ENCODE measurements at regions of chr7 and their contacts with region 1.

Region 1: GRCh38 chr7:31134246-31135188 is 82.4 kb downstream of the ADCYAP1R1 start:
- DNase-seq: peak in 1 of 2 donors; percentile 85
- H3K4me3 ChIP-seq: no peak overlapping the region
- H3K27ac ChIP-seq: no peak overlapping the region
- H3K4me1 ChIP-seq: no peaks in the 10 kb centered on the region
- H3K27me3 ChIP-seq: no peaks in the 10 kb centered on the region
- CTCF ChIP-seq: peak; percentile 10 to 57 (median 57)
- POLR2A ChIP-seq: no peak

Region 2: DNA sequence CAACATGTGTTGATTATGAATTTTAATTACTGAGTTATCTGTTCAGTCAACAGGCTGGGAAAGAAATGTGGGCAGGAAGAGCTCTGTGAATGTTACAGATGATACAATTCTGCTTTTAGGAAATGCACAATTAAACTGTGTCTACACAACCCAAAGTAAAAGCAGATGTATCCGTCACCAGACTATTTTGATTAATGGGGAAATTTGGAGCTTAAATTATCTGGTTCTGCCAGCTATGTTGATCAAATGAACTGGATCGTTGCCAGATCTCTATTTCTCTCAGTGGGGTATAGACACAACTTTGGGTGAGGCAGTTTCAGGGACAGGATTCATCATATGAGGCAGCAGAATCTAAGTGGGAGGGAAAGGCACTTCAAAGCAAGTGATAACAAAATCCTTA is 69.6 kb after region 1 on chr7:
- intact Hi-C with region 1: no loop called
- DNase-seq: no peak
- H3K4me3 ChIP-seq: no peak overlapping the region
- H3K27ac ChIP-seq: no peak overlapping the region
- H3K4me1 ChIP-seq: no peaks in the 10 kb centered on the region
- H3K27me3 ChIP-seq: no peaks in the 10 kb centered on the region
- CTCF ChIP-seq: no peak
- POLR2A ChIP-seq: no peak

Region 3: GRCh38 chr7:31603046-31603445 is 468.5 kb after region 1 on chr7:
- intact Hi-C with region 1: loop called (anchors 10 kb)
- DNase-seq: no peak
- H3K4me3 ChIP-seq: no peak overlapping the region
- H3K27ac ChIP-seq: no peak overlapping the region
- H3K4me1 ChIP-seq: no peaks in the 10 kb centered on the region
- H3K27me3 ChIP-seq: no peaks in the 10 kb centered on the region
- CTCF ChIP-seq: no peak
- POLR2A ChIP-seq: no peak